Activated B cell treated with CpG ODN at 0.5 μM for 24 hours (primary cell): ENCODE measurements at regions of chr10 and their contacts with region 1.

Region 1: DNA sequence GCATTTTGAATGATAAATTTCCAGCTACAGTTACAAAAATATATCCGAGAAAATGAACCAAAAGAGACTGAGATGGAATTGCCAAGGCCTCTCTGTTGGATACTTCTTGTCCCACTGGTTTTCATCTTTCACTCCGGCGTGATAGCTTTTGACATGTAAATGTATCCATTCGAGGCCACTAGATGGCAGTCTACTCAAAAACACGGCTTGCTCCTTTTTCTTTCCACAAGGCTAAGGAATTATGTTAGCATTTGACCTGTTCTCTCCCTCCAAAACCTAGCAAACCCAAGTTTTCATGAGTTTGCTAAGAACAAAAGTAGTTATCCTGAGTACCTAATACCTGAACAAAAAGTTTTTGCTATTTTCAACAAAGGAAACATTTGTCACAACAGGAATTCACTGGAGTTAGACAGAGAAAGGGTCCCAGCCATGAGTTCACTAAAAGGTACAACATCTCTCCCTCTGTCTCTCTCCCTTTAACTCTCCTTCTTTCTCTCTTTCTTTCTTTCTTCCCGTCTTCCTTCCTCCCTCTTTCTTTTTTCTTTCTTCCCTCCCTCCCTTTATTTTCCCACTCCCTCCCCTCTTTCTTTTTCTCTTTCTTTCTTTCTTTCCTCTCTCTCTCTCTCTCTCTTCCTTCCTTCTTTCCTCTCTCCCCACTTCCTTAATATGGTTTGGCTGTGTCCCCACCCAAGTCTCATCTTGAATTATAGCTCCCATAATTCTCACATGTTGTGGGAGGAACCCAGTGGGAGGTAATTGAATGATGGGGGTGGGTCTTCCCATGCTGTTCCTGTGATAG is 207.9 kb upstream of the MYO3A start:
- DNase-seq: no peak
- ATAC-seq: peak; percentile 34
- H3K4me3 Mint-ChIP-seq: no peak overlapping the region
- H3K27ac Mint-ChIP-seq: no peak overlapping the region
- H3K4me1 Mint-ChIP-seq: no peaks in the 10 kb centered on the region
- H3K27me3 Mint-ChIP-seq: peaks cover 23% of the 10 kb centered on the region
- CTCF ChIP-seq: peak; percentile 89

Region 2: GRCh38 chr10:26269754-26270153 is 543.6 kb after region 1 on chr10:
- CTCF ChIA-PET with region 1: no interaction called
- POLR2A ChIA-PET with region 1: no interaction called
- intact Hi-C with region 1: loop called (anchors 10 kb)
- DNase-seq: no peak
- ATAC-seq: no peak
- H3K4me3 Mint-ChIP-seq: no peak overlapping the region
- H3K27ac Mint-ChIP-seq: no peak overlapping the region
- H3K4me1 Mint-ChIP-seq: no peaks in the 10 kb centered on the region
- H3K27me3 Mint-ChIP-seq: peaks cover 13% of the 10 kb centered on the region
- CTCF ChIP-seq: no peak

Region 3: GRCh38 chr10:26556748-26557640 is 830.9 kb after region 1 on chr10:
- CTCF ChIA-PET with region 1: no interaction called
- POLR2A ChIA-PET with region 1: no interaction called
- intact Hi-C with region 1: loop called (anchors 5 kb)
- DNase-seq: no peak
- ATAC-seq: peak; percentile 64
- H3K4me3 Mint-ChIP-seq: no peak overlapping the region
- H3K27ac Mint-ChIP-seq: peak overlapping the region; percentile 42
- H3K4me1 Mint-ChIP-seq: no peaks in the 10 kb centered on the region
- H3K27me3 Mint-ChIP-seq: no peaks in the 10 kb centered on the region
- CTCF ChIP-seq: peak; percentile 29